SK-N-SH (cell line): ENCODE measurements at regions of chr6 and their contacts with region 1.

Region 1: DNA sequence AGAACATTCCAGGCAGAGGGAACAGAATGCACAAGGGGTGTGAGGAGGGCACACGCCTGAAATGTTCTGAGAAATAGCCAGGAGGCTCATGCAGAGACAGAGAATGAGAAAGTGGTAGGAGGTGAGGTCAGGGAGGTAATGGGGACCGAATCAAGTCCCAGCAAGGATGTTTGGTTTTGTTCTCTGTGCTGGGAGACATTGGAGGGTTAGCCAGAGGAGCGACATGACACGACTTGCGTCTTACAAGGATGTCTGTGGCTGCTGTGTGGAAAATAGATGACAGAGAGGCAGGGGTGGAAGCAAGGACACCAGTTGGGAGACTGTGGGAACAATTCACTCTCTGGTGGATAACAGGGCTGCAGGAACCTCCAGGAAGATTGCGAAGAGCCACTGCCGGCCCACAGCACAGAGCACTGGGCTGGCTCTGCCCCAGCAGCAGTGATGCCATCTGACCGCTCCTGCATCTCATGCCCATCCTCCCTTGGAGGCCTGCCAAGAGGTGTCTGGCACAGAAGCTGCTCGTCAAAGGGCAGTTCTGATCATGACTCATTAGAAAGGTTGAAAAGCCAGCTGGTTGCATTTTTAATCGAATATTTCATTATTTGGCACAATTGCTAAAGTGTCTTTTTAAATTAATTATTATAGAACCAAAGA is 57.7 kb upstream of the CD83 start:
- DNase-seq: peak; percentile 79
- H3K4me3 ChIP-seq: no peak overlapping the region
- H3K27ac ChIP-seq: peak overlapping the region in 1 of 2 experiments; percentile 24; a peak in 2 of 4 replicates
- H3K4me1 ChIP-seq: peaks cover 8 to 12% of the 10 kb centered on the region in 2 experiments; a peak in 2 of 4 replicates
- H3K27me3 ChIP-seq: no peaks in the 10 kb centered on the region
- CTCF ChIP-seq: no peak
- EP300 ChIP-seq: peak; percentile 60 to 62; a peak in 2 of 4 replicates
- RAD21 ChIP-seq: 0 out of 2 replicates have a peak, but pooled peaks have one; percentile 34

Region 2: DNA sequence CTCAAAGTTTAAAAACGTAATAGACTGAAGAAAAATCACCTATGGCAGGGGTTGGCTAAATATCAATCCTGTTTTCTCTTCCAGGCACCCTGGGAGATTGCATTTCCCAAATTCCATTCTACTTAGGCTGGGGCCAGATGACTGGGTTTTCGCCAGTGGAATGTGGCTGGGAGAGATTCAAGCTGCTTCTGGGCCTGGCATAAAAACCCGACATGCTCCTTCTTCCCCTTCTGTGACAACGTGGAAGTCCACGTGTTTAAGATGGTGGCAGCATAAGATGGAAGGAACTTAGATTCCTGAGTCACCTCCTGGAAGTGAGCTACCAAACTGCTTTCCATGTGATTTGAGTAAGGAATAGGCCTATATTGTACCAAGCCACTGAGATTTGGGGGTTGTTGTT is 24.5 kb before region 1 on chr6:
- CTCF ChIA-PET with region 1: no interaction called
- POLR2A ChIA-PET with region 1: no interaction called
- DNase-seq: no peak
- H3K4me3 ChIP-seq: no peak overlapping the region
- H3K27ac ChIP-seq: peak overlapping the region; percentile 34 to 60; a peak in 3 of 4 replicates
- H3K4me1 ChIP-seq: peaks cover 3 to 7% of the 10 kb centered on the region in 2 experiments; a peak in 2 of 4 replicates
- H3K27me3 ChIP-seq: no peaks in the 10 kb centered on the region
- CTCF ChIP-seq: no peak
- EP300 ChIP-seq: peak in 1 of 2 experiments; percentile 89; a peak in 1 of 4 replicates
- RAD21 ChIP-seq: no peak

Region 3: DNA sequence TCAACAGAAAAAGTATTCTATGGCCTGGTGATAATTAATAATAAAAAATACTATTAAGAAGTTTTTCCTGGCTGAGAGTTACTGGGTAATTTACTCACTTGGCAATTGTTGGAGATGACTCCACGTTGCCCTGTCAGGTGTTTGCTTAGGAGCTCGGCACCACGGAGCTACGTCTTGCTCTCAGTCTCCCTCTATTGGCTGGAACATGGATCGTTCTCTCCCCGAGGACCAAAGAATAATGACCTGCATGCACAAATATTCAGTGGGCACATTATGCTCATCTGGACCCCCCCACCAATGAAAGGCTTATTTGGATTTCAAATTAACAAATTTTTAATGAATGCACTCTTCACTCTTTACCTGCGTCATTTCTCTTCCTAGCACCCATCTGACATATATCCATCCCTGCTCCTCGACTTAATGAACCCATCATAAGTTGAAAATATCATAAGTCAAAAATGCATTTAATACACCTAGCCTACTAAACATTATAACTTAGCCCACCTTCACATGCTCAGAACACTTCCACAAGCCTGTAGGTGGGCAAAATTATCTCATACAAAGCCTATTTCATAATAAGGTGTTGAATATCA is 13.3 kb before region 1 on chr6:
- CTCF ChIA-PET with region 1: interaction called, 21 read pairs
- POLR2A ChIA-PET with region 1: no interaction called
- DNase-seq: peak; percentile 65
- H3K4me3 ChIP-seq: no peak overlapping the region
- H3K27ac ChIP-seq: no peak overlapping the region
- H3K4me1 ChIP-seq: no peaks in the 10 kb centered on the region
- H3K27me3 ChIP-seq: no peaks in the 10 kb centered on the region
- CTCF ChIP-seq: peak; percentile 73
- EP300 ChIP-seq: no peak
- RAD21 ChIP-seq: peak; percentile 73